ENCODE measurements at regions of chr1 and their contacts with region 1.

Region 1: DNA sequence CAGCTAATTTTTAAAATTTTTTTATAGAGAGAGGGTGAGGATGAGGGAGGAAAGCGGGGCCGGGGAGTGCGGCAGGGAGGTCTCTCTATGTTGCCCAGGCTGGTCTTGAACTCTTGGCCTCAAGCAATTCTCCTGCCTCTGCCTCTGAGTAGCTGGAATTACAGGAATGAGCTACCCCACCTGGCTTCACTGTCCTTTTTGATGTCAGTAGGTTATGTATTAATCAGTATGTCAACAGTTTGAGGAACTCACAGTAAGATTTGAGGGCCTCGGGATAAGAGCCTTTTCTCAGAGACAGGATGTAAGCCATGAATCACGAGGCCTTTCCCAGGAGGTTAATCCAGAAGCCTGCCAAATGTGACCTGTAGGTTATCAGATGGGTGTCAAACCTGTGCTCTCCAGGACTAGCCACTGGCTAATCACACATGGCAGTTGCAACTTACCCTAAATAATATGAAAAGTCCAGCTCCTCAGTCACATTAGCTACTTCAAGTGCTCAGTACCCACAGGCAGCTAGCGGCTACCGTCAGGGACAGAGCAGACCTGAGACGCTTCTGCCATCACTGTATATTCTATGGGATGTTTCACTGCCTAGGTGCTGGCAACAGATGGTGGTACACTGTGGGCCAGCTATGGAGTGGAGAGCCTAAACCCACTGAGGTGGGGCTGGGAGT is 33.1 kb downstream of the TRIM67 start:
- DNase-seq: peak; percentile 82 to 91
- H3K4me3 ChIP-seq: no peak overlapping the region
- H3K4me3 Mint-ChIP-seq: no peak overlapping the region
- H3K27ac Mint-ChIP-seq: no peak overlapping the region
- H3K4me1 ChIP-seq: peaks cover 32% of the 10 kb centered on the region
- H3K4me1 Mint-ChIP-seq: peaks cover 25% of the 10 kb centered on the region
- H3K27me3 ChIP-seq: no peaks in the 10 kb centered on the region
- H3K27me3 Mint-ChIP-seq: no peaks in the 10 kb centered on the region
- CTCF ChIP-seq: no peak

Region 2: GRCh38 chr1:231170875-231171274 is 24.1 kb before region 1 on chr1:
- CTCF ChIA-PET with region 1: no interaction called
- POLR2A ChIA-PET with region 1: no interaction called
- intact Hi-C with region 1: loop called (anchors 2 kb)
- DNase-seq: no peak
- H3K4me3 ChIP-seq: no peak overlapping the region
- H3K4me3 Mint-ChIP-seq: no peak overlapping the region
- H3K27ac Mint-ChIP-seq: no peak overlapping the region
- H3K4me1 ChIP-seq: no peaks in the 10 kb centered on the region
- H3K4me1 Mint-ChIP-seq: peaks cover 17% of the 10 kb centered on the region
- H3K27me3 ChIP-seq: no peaks in the 10 kb centered on the region
- H3K27me3 Mint-ChIP-seq: no peaks in the 10 kb centered on the region
- CTCF ChIP-seq: peak in 1 of 2 experiments; percentile 22